AG04450 (cell line): ENCODE measurements at regions of chr7 and their contacts with region 1.

Region 1: DNA sequence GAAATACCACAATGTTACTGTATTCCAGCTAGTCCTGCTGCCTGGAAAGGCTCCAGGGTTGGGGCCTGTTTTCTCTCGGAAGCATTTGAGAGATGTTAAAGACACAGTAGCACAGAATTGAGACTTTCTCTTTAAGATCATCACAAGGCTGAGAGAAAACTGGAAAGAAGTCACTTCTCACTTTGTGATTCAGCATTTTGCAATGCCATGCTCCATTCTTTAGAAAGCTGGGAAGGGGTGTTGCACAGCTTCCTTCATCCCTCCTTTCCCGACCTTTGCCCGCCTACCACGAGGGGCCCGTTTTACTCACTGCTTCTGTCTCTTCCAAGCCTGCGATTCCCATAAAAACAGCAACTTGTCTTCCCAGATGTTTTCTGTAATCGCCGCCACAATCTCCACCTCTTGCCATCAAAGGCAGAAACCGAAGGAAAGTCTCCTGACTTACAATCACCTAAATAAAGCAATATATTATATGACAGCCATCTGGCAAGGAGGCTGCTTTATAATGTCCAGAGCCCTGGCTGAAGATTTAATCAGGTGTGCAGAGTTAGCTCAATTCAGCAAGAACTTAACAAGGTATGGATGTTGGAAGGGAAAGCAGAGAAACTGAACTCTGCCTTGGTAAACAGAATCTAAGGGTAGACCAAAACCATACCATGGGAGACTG is 18.9 kb downstream of the NOD1 start:
- DNase-seq: peak; percentile 85
- H3K4me3 ChIP-seq: peak overlapping the region; percentile 26
- H3K27ac ChIP-seq: peak overlapping the region; percentile 95
- H3K27me3 ChIP-seq: no peaks in the 10 kb centered on the region
- CTCF ChIP-seq: no peak

Region 2: DNA sequence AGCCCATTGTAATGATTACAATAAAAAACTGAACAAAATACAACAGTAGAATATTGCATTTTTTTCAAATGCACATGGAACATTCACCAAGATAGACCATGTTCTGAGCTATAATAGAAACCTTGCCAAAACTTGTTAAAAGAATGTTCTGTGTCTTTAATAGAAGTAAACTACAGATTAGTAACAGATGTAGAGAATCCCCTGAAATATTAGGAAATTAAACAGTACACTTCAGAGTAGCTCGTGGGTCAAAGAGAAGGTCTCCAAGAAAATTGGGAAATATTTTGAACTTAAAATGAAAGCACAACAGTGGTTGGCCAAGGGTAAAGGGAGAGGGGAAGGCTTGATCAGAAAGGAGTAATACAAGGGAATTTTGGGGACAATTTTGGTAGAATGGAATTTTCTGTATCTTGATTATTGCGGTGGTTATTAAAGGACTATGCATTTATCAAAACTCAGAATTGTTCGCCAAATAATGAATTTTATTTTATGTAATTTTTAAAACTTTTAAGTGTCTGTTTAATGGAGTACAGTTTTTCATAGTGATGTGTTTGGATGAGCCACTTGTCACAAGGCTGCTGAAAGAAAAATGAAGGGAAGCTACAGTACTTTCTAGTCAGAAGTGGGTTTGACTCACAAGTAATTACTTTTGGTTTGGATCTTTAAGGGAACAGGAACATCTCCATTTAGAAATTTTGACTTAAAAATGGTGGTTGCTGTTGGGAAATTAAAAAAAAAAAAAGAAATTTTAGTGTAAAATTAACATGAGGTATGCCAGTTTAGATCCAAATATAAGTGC is 421.3 kb before region 1 on chr7:
- CTCF ChIA-PET with region 1: no interaction called
- POLR2A ChIA-PET with region 1: no interaction called
- DNase-seq: no peak
- H3K4me3 ChIP-seq: no peak overlapping the region
- H3K27ac ChIP-seq: no peak overlapping the region
- H3K27me3 ChIP-seq: no peaks in the 10 kb centered on the region
- CTCF ChIP-seq: no peak

Region 3: GRCh38 chr7:30478349-30479201 is 18.9 kb after region 1 on chr7 and contains the start of gene NOD1:
- CTCF ChIA-PET with region 1: no interaction called
- POLR2A ChIA-PET with region 1: interaction called, 11 read pairs
- DNase-seq: no peak
- H3K4me3 ChIP-seq: peak within 1 kb of the TSS; percentile 75
- H3K27ac ChIP-seq: peak within 1 kb of the TSS; percentile 74
- H3K27me3 ChIP-seq: no peaks in the 10 kb centered on the region
- CTCF ChIP-seq: no peak
- polyA plus RNA-seq, gene NOD1: 3.3 and 3.5 TPM in 2 replicates